HepG2 (cell line): ENCODE measurements at regions of chr6 and their contacts with region 1.

Region 1: GRCh38 chr6:45265246-45265645 is 62.9 kb upstream of the RUNX2 start:
- DNase-seq: peak; percentile 77
- ATAC-seq: peak; percentile 59; the same call in 2 of the 3 replicates
- H3K4me3 ChIP-seq: no peak overlapping the region
- H3K27ac ChIP-seq: peak overlapping the region; percentile 41
- H3K4me1 ChIP-seq: peaks cover 20% of the 10 kb centered on the region
- H3K27me3 ChIP-seq: no peaks in the 10 kb centered on the region
- CTCF ChIP-seq: no peak
- EP300 ChIP-seq: peak in 1 of 2 experiments; percentile 65; a peak in 2 of 4 replicates
- POLR2A ChIP-seq: no peak
- RAD21 ChIP-seq: no peak

Region 2: GRCh38 chr6:45310118-45310788 is 45.0 kb after region 1 on chr6:
- CTCF ChIA-PET with region 1: no interaction called
- POLR2A ChIA-PET with region 1: no interaction called
- in situ Hi-C with region 1: no loop called
- intact Hi-C with region 1: no loop called
- DNase-seq: no peak
- ATAC-seq: no peak
- H3K4me3 ChIP-seq: no peak overlapping the region
- H3K27ac ChIP-seq: no peak overlapping the region
- H3K4me1 ChIP-seq: no peaks in the 10 kb centered on the region
- H3K27me3 ChIP-seq: no peaks in the 10 kb centered on the region
- CTCF ChIP-seq: 0 out of 2 replicates have a peak, but pooled peaks have one; percentile 14
- EP300 ChIP-seq: no peak
- POLR2A ChIP-seq: no peak
- RAD21 ChIP-seq: no peak

Region 3: DNA sequence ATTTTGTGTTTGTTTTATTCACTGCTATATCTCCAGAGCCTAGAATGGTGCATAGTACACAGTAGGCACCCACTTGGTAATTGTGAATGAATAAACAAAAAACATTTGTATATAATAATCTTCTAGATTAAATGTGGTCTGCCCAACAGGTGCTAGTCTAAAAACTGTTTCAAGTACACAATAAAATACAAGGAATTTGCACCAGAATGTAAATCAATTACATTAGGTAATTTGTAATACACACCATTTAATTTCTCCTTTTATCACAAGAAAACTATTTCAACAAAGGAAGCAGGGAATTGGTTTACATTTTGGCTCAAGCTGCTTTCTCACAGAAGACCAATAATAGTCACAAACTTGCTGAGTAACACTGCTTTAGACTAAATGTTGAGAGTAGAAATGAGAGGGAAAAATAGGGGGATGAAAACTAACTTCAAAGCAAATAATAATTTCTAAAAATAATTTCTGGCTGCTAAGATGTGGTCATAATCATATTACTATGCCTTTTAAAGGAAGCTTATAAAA is 85.0 kb after region 1 on chr6:
- CTCF ChIA-PET with region 1: no interaction called
- POLR2A ChIA-PET with region 1: no interaction called
- in situ Hi-C with region 1: no loop called
- intact Hi-C with region 1: loop called (anchors 10 kb)
- DNase-seq: no peak
- ATAC-seq: no peak
- H3K4me3 ChIP-seq: no peak overlapping the region
- H3K27ac ChIP-seq: no peak overlapping the region
- H3K4me1 ChIP-seq: no peaks in the 10 kb centered on the region
- H3K27me3 ChIP-seq: no peaks in the 10 kb centered on the region
- CTCF ChIP-seq: no peak
- EP300 ChIP-seq: no peak
- POLR2A ChIP-seq: no peak
- RAD21 ChIP-seq: no peak